Body of pancreas (tissue), 4 donors: ENCODE measurements at regions of chr14 and their contacts with region 1.

Region 1: DNA sequence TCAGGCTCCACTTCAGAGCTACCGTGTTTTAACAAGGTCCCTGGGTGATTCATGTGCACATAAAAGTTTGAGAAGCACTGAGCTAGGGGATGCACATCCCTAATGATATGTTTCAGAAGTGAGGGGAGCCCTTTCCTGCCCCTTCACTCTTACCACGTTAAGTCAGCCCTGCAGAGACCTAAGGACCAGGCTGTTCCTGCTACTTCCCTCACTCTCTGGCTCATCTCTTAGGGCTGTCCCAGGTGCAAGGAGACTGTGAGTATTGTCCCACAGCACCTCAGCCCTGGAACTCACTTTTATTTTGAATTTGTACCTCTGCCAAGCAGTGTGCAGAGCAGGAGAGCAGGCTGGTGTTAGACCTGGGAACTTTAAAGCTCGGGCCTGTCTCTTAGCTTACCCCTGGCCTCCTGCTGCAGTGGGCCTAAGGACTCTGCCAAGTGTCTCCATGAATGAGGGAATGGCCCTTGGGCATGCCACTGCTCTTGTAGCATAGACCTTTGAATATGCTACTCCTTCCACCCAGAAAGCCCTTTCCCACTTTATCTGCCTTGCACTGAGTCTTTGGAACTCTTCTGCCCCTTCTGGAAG is 11.0 kb upstream of the SUSD6 start:
- DNase-seq: no peak
- ATAC-seq: no peak
- H3K4me3 ChIP-seq: no peak overlapping the region
- H3K27ac ChIP-seq: no peak overlapping the region
- H3K4me1 ChIP-seq: no peaks in the 10 kb centered on the region
- H3K27me3 ChIP-seq: no peaks in the 10 kb centered on the region
- CTCF ChIP-seq: no peak
- POLR2A ChIP-seq: no peak

Region 2: DNA sequence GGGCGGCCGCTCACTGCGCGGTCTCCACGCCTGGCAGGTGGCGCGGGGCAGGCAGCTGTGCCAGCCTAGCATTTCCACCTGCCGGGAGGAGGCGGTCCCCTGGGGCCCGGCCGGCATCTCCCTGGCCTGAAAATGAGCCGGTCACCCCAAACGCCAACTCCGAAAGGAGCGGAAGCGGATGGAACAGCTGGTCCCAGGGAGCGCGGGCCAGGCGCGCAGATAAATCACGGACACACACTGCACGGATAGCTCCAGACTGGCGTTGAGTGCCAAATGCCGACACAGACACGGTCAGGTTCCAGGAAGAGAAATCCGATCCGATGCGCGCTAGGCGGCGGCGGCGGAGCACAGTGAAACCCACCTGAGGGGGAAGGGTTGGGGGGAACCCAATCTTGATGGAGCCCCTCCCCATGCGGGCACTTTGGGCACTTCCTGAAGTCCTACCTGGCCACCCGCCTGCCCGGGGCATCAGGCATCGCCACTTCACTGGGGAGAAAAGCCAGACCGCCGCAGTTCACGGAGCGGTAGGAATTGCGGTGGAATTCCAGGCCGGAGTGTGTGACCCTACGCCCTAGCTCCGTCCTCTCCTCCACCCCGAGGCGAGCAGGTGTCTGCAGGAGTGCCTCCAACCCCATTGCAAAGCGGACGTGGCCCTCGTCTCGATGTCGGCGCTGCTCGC is 116.5 kb before region 1 on chr14:
- intact Hi-C with region 1: no loop called
- DNase-seq: peak; percentile 17 to 41 (median 20)
- ATAC-seq: peak; percentile 56
- H3K4me3 ChIP-seq: peak overlapping the region in 1 of 2 donors; percentile 4
- H3K27ac ChIP-seq: no peak overlapping the region
- H3K4me1 ChIP-seq: peaks cover 17% of the 10 kb centered on the region
- H3K27me3 ChIP-seq: peaks cover 0 to 9% of the 10 kb centered on the region in 2 donors
- CTCF ChIP-seq: no peak
- POLR2A ChIP-seq: no peak

Region 3: DNA sequence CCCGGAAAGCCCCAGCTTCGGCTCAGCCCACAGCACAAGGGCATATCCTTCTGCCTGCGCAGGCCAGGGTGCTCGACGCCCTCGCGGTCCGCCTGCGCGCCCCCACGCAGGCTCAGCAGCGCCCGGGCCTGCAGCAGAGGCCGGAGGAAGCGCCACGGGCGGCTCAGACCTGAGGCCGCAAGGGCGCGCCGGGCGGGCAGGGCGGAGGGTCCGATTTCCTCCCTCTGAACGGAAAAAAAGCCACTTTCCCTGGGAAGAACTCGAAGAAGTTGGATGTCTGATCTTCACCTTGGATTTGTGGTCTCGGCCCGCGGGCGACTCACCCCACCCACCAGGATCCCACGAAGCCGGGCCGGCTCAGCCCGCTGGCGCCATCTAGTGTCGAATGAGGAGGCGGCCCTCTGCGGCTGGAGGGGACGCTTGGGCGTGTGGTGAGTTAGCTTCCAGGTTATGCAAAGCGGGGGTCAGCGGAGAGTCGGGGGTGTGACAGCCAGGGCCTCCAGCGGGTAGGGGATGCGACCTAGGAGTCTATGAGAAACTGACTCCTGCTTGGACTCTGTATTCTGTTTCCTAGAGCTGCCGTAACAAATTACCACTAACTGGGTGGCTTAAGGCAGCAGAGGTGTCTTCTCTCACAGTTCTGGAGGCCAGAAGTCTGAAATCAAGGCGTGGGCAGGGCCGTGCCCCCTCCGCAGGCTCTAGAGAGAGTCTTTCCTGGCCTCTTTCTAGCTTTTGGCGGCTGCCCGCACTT is 126.5 kb after region 1 on chr14:
- intact Hi-C with region 1: loop called (anchors 5 kb)
- DNase-seq: peak; percentile 69 to 78 (median 78)
- ATAC-seq: peak; percentile 91
- H3K4me3 ChIP-seq: peak overlapping the region in 1 of 2 donors; percentile 10
- H3K27ac ChIP-seq: peak overlapping the region in 1 of 4 donors; percentile 7
- H3K4me1 ChIP-seq: peaks cover 11% of the 10 kb centered on the region
- H3K27me3 ChIP-seq: no peaks in the 10 kb centered on the region
- CTCF ChIP-seq: peak; percentile 95 to 99 (median 98)
- POLR2A ChIP-seq: no peak